Panc1 (cell line): ENCODE measurements at regions of chr15 and their contacts with region 1.

Region 1: GRCh38 chr15:31391687-31392671 is 65.3 kb downstream of the KLF13 start:
- DNase-seq: peak; percentile 4
- ATAC-seq: peak; percentile 87
- H3K4me3 ChIP-seq: peak overlapping the region; percentile 56 to 80
- H3K27ac ChIP-seq: no peak overlapping the region
- H3K4me1 ChIP-seq: peaks cover 9% of the 10 kb centered on the region
- H3K27me3 ChIP-seq: no peaks in the 10 kb centered on the region
- CTCF ChIP-seq: no peak

Region 2: GRCh38 chr15:31156226-31156625 is 235.8 kb before region 1 on chr15:
- CTCF ChIA-PET with region 1: interaction called, 16 read pairs
- POLR2A ChIA-PET with region 1: no interaction called
- in situ Hi-C with region 1: no loop called
- intact Hi-C with region 1: no loop called
- DNase-seq: no peak
- ATAC-seq: no peak
- H3K4me3 ChIP-seq: no peak overlapping the region
- H3K27ac ChIP-seq: no peak overlapping the region
- H3K4me1 ChIP-seq: no peaks in the 10 kb centered on the region
- H3K27me3 ChIP-seq: no peaks in the 10 kb centered on the region
- CTCF ChIP-seq: no peak